Right ventricle myocardium inferior (tissue), 1 donor: ENCODE measurements at regions of chr22 and their contacts with region 1.

Region 1: DNA sequence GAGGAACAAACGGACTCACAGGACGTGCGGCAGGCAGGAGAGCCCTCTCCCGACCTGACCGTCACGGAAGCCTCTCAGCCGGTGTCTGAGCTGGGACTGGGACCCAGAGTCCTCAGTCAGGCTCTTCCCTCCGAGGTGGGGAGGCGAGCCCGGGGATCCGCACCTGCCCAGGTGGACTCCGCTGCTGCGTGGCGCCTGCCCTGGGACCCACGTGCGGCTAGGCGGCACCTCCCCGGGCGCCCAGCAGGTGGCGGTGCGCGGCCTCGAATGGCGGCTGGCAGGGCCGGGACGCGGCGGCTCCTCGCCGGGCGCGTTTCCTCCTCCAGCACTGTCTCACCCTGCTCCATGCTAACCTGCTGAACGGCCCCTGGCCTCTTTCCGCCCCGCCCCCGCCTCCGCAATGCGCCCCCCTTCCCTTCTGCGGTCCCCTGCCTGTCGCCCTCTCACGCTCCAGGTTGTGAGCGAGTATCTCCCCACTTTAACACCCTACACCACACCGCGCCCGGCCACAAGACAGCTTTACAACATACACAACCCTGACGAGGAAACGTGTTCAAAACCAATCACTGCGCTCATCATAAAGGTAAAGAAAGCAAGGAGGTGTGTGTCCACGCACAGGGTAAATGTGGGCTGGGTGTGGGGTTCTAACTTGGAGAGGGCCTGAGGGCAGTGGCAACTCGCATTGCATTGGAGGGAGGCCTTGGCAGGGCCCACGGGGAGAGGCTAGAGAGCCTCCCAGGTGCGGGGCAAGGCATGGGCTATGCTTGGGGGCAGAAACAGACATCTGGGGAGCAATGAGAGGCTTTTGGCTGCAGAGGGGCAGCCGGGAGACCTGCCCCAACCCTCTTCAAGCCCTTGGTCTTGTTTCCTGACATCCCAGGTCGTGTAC is 25.9 kb upstream of the ATXN10 start:
- DNase-seq: peak; percentile 80
- ATAC-seq: peak; percentile 87

Region 2: DNA sequence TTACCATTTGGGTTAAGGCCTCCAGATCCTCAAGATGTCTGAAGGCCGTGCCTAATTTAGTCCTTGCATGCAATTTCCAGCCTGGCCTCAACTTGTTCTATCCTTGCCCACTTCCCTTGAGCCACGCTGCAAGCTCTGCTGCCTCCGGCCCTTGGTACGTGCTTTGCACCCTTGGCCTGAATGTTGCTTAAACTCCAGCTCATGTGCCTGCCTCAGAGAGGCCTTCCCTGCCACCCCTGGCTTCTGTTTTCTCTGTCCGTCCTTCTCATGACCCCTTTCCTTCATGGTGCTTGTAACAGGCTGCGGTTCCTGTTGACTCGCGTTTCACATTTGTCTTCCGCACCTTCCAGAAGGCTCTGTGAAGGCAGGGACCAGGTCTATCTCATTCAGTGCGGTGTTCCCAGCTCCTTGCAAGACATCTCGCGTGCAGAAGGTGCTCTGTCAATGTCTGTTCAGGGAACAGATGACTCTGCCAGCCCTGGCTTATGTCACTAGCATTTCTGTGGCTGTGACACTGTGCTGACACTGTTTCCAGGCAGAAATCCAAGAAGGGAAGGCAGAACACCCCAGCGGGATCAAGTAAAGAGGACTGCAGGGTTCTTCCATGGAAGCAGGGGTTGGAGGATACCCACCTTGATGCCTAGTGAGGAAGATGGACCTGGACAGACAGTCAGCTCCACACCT is 81.3 kb before region 1 on chr22:
- intact Hi-C with region 1: no loop called
- DNase-seq: no peak
- ATAC-seq: peak; percentile 88

Region 3: GRCh38 chr22:45577746-45578523 is 67.8 kb before region 1 on chr22:
- intact Hi-C with region 1: loop called (anchors 2 kb)
- DNase-seq: peak; percentile 91
- ATAC-seq: peak; percentile 75

Region 4: GRCh38 chr22:45863981-45864751 is 218.4 kb after region 1 on chr22:
- intact Hi-C with region 1: loop called (anchors 5 kb)
- DNase-seq: no peak
- ATAC-seq: peak; percentile 70